HepG2 (cell line): ENCODE measurements at regions of chr2 and their contacts with region 1.

Region 1: DNA sequence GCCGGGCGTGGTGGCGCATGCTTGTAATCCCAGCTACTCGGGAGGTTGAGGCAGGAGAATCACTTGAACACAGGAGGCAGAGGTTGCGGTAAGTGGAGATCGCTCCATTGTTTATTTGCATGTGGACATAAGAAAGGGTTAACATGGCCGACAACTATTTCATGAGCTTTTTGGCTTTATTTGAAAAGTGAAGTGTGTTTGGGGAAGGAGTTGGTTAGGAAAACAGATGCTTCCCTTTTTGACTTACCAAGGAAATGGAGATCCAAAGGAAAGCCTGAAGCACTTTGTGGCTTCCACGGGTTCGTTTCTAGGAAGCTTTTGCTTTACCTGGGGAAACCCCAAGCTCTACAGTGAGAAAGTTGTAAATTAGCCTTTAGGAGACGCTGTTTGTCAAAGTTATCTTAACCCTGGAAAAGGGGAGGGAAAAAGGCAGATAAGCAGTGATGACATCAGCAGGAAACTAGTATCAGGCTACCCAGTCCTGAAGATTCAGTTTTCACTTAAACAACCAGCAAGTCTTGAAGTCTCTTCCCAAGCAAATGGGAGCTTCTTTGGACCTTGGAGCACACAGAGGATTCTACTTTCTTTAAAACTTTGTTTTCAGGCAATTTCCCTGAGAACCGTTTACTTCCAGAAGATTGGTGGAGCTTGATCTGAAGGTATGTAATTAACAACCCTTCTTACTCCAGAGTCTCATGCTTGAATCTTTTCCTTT is at the start of gene CASP10:
- DNase-seq: peak; percentile 94
- ATAC-seq: peak; percentile 84
- H3K4me3 ChIP-seq: peak within 1 kb of the TSS; percentile 68 to 95 (median 74)
- H3K27ac ChIP-seq: peak within 1 kb of the TSS; percentile 74
- H3K4me1 ChIP-seq: peaks cover 68% of the 10 kb centered on the region
- H3K27me3 ChIP-seq: no peaks in the 10 kb centered on the region; a peak in 1 of 5 replicates
- CTCF ChIP-seq: peak; percentile 96
- EP300 ChIP-seq: 0 out of 4 replicates have a peak, but pooled peaks of 1 of the 2 experiments have one; percentile 52
- POLR2A ChIP-seq: peak; percentile 70 to 88
- RAD21 ChIP-seq: peak; percentile 83
- total RNA-seq, gene CASP10: 22.2 and 31.1 TPM in 2 replicates

Region 2: GRCh38 chr2:200888704-200889625 is 293.8 kb before region 1 on chr2 and contains the starts of genes NIF3L1 and PPIL3:
- CTCF ChIA-PET with region 1: no interaction called
- POLR2A ChIA-PET with region 1: interaction called, 12 read pairs
- in situ Hi-C with region 1: no loop called
- intact Hi-C with region 1: no loop called
- DNase-seq: peak; percentile 99
- ATAC-seq: peak; percentile 90
- H3K4me3 ChIP-seq: peak within 1 kb of the TSS; percentile 79 to 92 (median 90)
- H3K27ac ChIP-seq: peak within 1 kb of the TSS; percentile 97
- H3K4me1 ChIP-seq: peaks cover 34% of the 10 kb centered on the region
- H3K27me3 ChIP-seq: no peaks in the 10 kb centered on the region; a peak in 2 of 5 replicates
- CTCF ChIP-seq: no peak; the same call in none of the 2 replicates
- EP300 ChIP-seq: peak; percentile 30 to 68; a peak in 2 of 4 replicates
- POLR2A ChIP-seq: peak; percentile 69 to 95
- RAD21 ChIP-seq: 0 out of 2 replicates have a peak, but pooled peaks have one; percentile 17
- total RNA-seq, gene NIF3L1: 67.9 and 98.5 TPM in 2 replicates
- total RNA-seq, gene PPIL3: 98.7 and 126 TPM in 2 replicates

Region 3: DNA sequence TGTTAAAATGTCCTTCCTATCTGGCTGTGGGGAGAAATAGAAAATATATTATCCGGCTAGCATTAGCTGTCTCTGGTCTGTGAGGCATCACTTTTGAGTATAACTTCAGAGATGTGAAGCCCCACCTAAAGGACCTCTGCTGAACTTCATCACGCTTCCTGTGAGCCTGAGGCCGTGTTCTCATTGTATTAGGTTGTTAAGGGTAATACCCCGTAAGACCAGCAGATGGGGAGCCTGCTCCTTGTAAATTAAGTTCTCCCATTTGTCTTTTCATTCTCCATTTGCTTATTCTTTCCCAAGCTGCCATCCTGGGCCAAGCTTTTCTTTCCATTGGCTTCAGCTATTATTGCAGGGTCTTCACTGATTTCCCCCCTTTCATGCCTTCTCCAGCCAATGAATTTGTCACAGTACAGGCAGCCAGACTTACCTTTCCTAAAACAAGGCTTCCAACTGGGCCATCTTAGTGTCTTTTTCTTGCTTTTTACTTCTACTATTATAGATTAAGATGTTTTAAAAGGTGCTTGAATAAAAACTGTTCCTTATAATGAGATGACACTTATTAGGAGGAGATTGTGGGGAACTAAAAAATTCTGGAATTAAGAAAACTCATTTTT is 281.2 kb before region 1 on chr2:
- CTCF ChIA-PET with region 1: interaction called, 30 read pairs
- POLR2A ChIA-PET with region 1: interaction called, 9 read pairs
- in situ Hi-C with region 1: loop called (anchors 5 kb)
- intact Hi-C with region 1: no loop called
- DNase-seq: peak; percentile 94
- ATAC-seq: peak; percentile 97
- H3K4me3 ChIP-seq: no peak overlapping the region
- H3K27ac ChIP-seq: no peak overlapping the region
- H3K4me1 ChIP-seq: no peaks in the 10 kb centered on the region
- H3K27me3 ChIP-seq: no peaks in the 10 kb centered on the region
- CTCF ChIP-seq: peak; percentile 92
- EP300 ChIP-seq: no peak
- POLR2A ChIP-seq: no peak
- RAD21 ChIP-seq: peak; percentile 87

Region 4: DNA sequence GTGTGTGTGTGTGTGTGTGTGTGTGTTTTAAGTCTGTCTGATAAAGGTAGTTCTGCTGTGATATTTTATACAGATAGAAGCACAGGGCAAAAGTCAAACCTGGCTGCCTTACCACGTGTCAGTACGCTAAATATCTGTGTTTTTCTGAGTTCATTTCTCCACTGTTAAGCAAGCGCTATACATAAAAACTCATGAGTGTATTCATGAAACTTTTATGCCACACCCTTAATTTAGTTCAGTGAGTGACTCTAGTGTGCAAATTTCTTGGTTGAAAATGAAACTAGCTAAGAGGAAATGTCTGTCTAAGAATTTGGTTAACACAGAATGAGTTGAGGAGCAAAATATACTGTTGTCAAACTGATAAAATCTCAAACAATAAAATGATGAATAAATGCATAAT is 11.3 kb after region 1 on chr2:
- CTCF ChIA-PET with region 1: no interaction called
- POLR2A ChIA-PET with region 1: interaction called, 20 read pairs
- in situ Hi-C with region 1: no loop called
- intact Hi-C with region 1: no loop called
- DNase-seq: no peak
- ATAC-seq: no peak
- H3K4me3 ChIP-seq: no peak overlapping the region
- H3K27ac ChIP-seq: no peak overlapping the region
- H3K4me1 ChIP-seq: peaks cover 41% of the 10 kb centered on the region
- H3K27me3 ChIP-seq: no peaks in the 10 kb centered on the region
- CTCF ChIP-seq: no peak
- EP300 ChIP-seq: no peak
- POLR2A ChIP-seq: no peak
- RAD21 ChIP-seq: no peak

Region 5: DNA sequence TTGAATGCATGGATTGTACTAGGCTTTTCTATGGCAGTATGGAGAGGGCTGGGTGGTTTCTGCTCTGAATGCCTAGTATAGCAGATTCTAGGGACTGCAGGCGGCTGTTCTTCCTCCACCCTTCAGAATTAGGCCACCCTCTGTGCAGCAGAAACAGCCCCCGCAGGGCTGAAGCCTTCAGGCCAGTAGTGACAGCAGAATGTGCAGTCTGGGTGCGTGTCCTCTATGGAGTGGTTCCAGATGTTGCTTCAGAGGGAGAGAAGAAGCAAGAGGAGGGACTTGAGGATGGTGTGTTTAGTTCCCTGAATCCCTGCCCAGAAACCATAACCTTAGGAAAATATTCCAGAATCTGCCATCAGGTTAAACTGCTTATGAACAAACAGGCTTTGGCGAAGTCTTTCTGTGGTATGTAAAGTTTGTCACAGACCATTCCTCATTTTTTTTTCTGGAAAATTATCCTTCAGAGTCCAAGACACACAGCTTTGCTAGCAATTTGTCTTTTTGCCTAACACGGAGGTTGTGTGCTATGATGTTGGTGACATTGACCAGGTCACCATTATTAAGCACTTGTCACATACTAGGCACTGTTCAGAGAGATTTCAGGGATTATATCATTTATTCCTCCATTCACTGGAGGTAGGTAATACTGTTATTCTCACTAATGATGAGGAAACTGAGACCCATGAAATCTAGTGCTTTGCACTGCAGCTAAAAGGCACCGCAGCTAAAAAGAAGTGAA is 21.3 kb after region 1 on chr2:
- CTCF ChIA-PET with region 1: no interaction called
- POLR2A ChIA-PET with region 1: interaction called, 37 read pairs
- in situ Hi-C with region 1: no loop called
- intact Hi-C with region 1: loop called (anchors 1 kb)
- DNase-seq: no peak
- ATAC-seq: peak; percentile 28
- H3K4me3 ChIP-seq: peak overlapping the region; percentile 11 to 53 (median 12); a peak in 4 of 6 replicates
- H3K27ac ChIP-seq: peak overlapping the region; percentile 97
- H3K4me1 ChIP-seq: peaks cover 52% of the 10 kb centered on the region
- H3K27me3 ChIP-seq: no peaks in the 10 kb centered on the region
- CTCF ChIP-seq: no peak
- EP300 ChIP-seq: no peak
- POLR2A ChIP-seq: no peak; a peak in 1 of 4 replicates
- RAD21 ChIP-seq: no peak